Heart right ventricle (tissue), 16 donors: ENCODE measurements at regions of chr13 and their contacts with region 1.

Region 1: DNA sequence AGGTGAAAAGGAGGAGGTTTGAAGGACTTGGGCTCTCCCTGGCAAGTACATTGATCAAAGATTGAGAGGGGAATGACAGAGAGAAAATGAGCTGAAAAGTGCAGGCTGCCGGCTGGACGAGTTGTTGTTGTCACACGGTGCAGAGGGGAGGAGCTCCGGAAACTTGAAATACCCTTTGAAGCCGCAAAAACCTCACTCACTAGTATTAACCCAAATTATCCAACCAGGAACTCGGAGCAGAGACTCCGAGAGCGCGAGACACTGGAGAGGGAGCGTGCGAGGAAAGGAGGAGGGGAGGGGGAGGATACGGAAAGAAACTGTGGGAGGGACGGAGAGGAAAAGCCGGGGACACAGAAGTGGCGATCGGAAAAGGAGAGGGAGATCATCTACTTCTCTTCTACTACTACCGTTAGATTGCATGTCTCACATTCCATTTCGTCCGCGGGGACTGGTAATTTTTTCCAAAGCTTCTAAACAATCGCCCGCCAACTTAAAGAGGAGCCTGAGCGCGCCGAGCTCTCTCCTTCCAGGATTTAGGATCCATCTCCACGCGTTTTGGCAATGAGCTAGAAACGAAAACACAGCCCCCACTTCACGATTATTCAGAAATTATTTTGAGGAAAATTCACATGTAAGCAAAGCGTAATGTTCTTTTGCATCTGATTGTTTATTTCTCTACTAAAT is at the start of gene DACH1:
- DNase-seq: peak; percentile 53 to 71
- ATAC-seq: peak; percentile 77 to 84 (median 80)
- H3K4me3 ChIP-seq: peak within 1 kb of the TSS; percentile 53 to 89 (median 80)
- H3K27ac ChIP-seq: peak within 1 kb of the TSS in 9 of 10 donors; percentile 48 to 93 (median 87)
- H3K4me1 ChIP-seq: peaks cover 0 to 26% (median 11%) of the 10 kb centered on the region in 9 donors
- H3K27me3 ChIP-seq: peaks cover 0 to 48% (median 17%) of the 10 kb centered on the region in 7 donors
- CTCF ChIP-seq: no peak
- total RNA-seq, gene DACH1: 1.8 to 5.2 (median 2.8) TPM

Region 2: DNA sequence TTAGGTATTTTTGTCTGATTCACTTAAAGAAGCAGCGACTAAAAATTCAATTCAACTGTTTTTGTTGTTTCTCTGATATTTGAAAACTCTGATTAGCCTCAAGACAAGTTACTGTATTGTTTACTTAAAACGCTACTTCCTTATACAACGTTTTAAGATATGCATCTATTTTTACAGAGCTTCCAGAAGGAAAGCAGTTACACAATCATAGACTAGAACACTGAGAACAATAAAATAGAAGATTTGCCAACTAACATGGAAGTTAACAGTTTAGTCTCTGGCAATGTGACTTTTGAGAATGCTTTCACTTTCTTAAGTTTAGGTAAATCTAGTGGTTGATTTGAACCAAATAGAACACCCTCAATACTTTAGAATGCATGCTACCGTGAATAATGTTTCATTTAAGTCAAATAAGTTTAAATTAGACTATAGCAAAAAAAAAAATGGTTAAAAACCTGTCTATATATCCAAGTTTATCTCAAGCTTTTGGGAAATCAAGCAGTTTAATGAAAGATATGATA is 615.0 kb before region 1 on chr13:
- intact Hi-C with region 1: loop called in 3 of 10 experiments (anchors 5 to 10 kb)
- DNase-seq: no peak
- ATAC-seq: peak in 5 of 8 donors; percentile 55 to 79 (median 69)
- H3K4me3 ChIP-seq: peak overlapping the region in 3 of 10 donors; percentile 4 to 16 (median 5)
- H3K27ac ChIP-seq: peak overlapping the region in 8 of 10 donors; percentile 16 to 76 (median 50)
- H3K4me1 ChIP-seq: peaks cover 0 to 21% (median 7%) of the 10 kb centered on the region in 9 donors
- H3K27me3 ChIP-seq: no peaks in the 10 kb centered on the region
- CTCF ChIP-seq: no peak

Region 3: GRCh38 chr13:71460211-71460610 is 407.1 kb before region 1 on chr13:
- intact Hi-C with region 1: loop called in 2 of 10 experiments (anchors 10 kb)
- DNase-seq: no peak
- ATAC-seq: peak in 1 of 8 donors; percentile 38
- H3K4me3 ChIP-seq: no peak overlapping the region
- H3K27ac ChIP-seq: no peak overlapping the region
- H3K4me1 ChIP-seq: peaks cover 0 to 16% (median 7%) of the 10 kb centered on the region in 9 donors
- H3K27me3 ChIP-seq: no peaks in the 10 kb centered on the region
- CTCF ChIP-seq: no peak

Region 4: DNA sequence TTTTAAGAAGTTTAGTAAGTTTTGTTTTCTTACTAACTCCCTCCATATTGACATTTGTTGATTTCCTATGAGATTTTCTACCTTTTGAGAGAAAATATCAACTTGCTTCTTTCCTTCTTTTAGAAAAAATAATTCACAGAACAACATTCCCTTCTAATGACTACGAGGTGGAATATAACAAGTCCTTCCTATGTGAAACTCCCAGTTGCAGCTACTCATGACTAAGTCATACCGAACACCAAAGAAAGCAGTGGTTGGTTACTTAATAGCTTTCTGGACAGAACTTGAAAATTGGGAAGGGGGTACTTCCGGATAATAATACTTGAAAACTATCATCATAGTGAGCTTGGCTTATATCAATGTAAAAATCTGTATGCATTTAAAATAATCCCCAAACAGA is 145.1 kb before region 1 on chr13:
- intact Hi-C with region 1: loop called in 1 of 10 experiments (anchors 10 kb)
- DNase-seq: no peak
- ATAC-seq: no peak
- H3K4me3 ChIP-seq: no peak overlapping the region
- H3K27ac ChIP-seq: no peak overlapping the region
- H3K4me1 ChIP-seq: peaks cover 0 to 3% (median 0%) of the 10 kb centered on the region in 9 donors
- H3K27me3 ChIP-seq: no peaks in the 10 kb centered on the region
- CTCF ChIP-seq: no peak

Region 5: DNA sequence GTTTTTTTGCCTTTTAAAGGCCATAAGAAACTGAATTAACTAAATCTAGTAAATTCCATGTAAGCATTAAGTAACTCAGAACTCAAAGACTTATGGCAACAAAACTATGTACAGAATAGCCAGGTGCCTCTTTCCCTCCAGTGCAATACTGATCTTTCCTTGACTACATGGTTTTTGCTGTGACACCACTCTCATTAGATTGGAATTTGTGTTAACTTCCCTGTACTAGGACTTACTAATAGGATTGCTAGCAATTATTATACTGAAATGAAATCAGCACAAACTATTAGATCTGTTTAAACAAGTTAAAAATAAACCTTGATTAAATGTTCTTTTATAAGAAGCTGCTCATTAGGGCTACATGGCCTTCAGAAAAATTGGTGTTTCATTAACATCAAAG is 96.6 kb before region 1 on chr13:
- intact Hi-C with region 1: loop called in 1 of 10 experiments (anchors 10 kb)
- DNase-seq: no peak
- ATAC-seq: no peak
- H3K4me3 ChIP-seq: no peak overlapping the region
- H3K27ac ChIP-seq: no peak overlapping the region
- H3K4me1 ChIP-seq: peaks cover 0 to 19% (median 0%) of the 10 kb centered on the region in 9 donors
- H3K27me3 ChIP-seq: no peaks in the 10 kb centered on the region
- CTCF ChIP-seq: no peak